MCF 10A (cell line): ENCODE measurements at regions of chr15 and their contacts with region 1.

Region 1: GRCh38 chr15:29821416-29822131 is 694 bp downstream of the TJP1 start:
- DNase-seq: peak; percentile 87
- H3K4me3 Mint-ChIP-seq: peak overlapping the region; percentile 87
- H3K27ac Mint-ChIP-seq: peak overlapping the region; percentile 92
- H3K4me1 Mint-ChIP-seq: peaks cover 11% of the 10 kb centered on the region
- H3K27me3 Mint-ChIP-seq: no peaks in the 10 kb centered on the region
- CTCF ChIP-seq: no peak

Region 2: DNA sequence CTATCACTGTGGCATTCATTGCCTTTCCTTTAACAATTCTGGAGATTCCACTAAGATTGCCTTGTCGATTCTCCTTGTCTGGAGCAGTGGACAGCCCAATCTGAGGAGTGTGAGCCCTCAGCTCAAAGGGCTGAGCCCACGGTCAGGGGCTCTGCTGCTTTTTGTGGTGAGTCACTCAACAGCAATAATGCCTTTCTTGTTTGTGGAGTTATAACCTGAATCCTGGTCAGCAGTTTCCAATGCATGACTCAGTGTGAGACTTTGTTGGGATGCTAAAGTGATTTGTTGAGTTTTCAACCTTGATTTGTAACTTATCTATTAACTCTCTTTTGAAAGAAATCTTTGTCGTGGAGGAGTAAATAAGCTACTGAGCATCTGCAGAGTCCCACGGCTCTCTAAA is 182.8 kb before region 1 on chr15:
- CTCF ChIA-PET with region 1: no interaction called
- POLR2A ChIA-PET with region 1: no interaction called
- intact Hi-C with region 1: no loop called
- DNase-seq: no peak
- H3K4me3 Mint-ChIP-seq: no peak overlapping the region
- H3K27ac Mint-ChIP-seq: no peak overlapping the region
- H3K4me1 Mint-ChIP-seq: peaks cover 5% of the 10 kb centered on the region
- H3K27me3 Mint-ChIP-seq: peaks cover 31% of the 10 kb centered on the region
- CTCF ChIP-seq: no peak

Region 3: DNA sequence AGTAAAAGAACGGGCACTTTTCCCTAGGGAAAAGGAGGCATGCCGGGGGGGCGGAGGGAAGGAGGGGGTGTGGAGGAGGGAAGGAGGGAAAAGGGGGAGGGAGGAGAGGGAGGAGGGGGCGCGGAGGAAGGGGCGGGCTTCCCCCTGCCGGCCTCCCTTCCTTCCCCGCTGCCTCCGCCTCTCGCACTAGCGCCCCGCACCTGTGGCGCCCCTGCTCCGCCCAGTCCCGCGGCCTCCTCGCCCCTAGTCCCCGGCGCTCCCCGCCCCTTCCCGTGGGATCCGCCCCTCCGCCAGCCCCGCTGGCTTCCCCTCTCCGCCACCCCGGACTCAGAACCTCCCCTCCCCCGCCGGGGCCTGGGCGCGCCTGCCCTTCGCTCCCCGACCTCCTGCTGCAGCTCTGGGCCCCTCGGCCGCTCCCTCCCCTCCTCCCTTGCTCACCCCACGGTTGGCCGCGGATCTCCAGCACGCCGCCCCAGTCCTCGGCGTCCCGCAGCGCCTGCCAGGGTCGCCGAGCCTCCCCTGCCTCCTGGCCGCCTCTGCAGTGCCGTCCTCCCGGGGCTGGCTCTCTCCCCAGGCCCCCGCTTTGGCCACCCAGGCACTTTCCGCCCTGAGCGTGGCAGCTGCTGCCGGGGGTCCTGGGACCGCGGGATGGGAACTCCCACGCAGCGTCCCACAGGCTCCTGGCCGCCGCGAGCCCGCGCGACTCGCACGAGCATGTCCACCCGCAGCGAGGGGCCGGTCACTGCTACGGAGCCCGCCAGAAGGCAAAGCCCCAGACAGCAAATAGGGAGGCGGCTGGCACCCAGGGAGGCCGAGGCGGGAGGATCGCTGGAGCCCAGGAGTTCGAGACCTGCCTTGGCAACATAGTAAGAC is 146.7 kb before region 1 on chr15:
- CTCF ChIA-PET with region 1: no interaction called
- POLR2A ChIA-PET with region 1: interaction called, 4 read pairs
- intact Hi-C with region 1: loop called (anchors 5 kb)
- DNase-seq: no peak
- H3K4me3 Mint-ChIP-seq: no peak overlapping the region
- H3K27ac Mint-ChIP-seq: no peak overlapping the region
- H3K4me1 Mint-ChIP-seq: peaks cover 13% of the 10 kb centered on the region
- H3K27me3 Mint-ChIP-seq: no peaks in the 10 kb centered on the region
- CTCF ChIP-seq: no peak

Region 4: DNA sequence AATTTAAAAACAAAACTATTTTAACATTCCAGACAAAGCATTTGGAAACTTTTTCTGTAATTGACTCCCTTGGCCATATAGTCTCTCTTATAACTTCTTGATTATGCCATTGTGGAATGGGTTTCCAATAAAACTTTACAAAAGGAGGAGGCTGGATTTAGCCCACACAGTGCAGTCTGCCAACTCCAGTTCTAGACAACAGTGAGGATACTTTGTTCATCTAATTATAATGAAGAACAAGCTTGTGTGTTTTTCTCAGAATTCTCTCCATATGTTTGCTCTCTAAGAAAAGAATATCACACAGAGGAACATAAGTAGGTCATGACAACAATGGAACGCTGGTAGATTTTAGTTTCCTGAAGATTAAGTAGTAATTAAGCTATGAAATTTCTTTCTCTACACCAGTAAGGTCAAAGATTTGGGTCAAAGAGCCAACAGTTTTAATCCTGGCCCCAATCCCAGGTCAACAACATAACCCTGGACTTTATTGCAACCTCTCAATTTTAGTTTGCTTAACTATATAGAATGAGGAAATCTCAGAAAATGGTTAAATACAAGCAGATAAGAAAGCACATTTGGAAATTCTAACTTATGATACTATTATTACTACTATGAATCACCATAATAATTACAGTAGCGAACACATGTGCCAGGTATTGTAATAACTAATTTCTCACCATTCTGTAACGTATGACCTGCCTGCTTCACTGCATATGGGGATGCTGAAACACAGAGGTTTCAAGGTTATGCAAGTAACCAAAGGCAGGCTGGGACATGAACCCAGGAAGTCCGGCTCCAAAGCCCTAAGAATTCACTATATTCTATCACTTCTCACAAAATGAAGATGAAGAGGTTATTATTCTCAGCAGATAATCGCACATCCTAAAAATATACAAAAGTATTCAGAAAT is 65.0 kb before region 1 on chr15:
- CTCF ChIA-PET with region 1: no interaction called
- POLR2A ChIA-PET with region 1: interaction called, 17 read pairs
- intact Hi-C with region 1: no loop called
- DNase-seq: peak; percentile 84
- H3K4me3 Mint-ChIP-seq: no peak overlapping the region
- H3K27ac Mint-ChIP-seq: peak overlapping the region; percentile 57
- H3K4me1 Mint-ChIP-seq: peaks cover 14% of the 10 kb centered on the region
- H3K27me3 Mint-ChIP-seq: no peaks in the 10 kb centered on the region
- CTCF ChIP-seq: no peak

Region 5: DNA sequence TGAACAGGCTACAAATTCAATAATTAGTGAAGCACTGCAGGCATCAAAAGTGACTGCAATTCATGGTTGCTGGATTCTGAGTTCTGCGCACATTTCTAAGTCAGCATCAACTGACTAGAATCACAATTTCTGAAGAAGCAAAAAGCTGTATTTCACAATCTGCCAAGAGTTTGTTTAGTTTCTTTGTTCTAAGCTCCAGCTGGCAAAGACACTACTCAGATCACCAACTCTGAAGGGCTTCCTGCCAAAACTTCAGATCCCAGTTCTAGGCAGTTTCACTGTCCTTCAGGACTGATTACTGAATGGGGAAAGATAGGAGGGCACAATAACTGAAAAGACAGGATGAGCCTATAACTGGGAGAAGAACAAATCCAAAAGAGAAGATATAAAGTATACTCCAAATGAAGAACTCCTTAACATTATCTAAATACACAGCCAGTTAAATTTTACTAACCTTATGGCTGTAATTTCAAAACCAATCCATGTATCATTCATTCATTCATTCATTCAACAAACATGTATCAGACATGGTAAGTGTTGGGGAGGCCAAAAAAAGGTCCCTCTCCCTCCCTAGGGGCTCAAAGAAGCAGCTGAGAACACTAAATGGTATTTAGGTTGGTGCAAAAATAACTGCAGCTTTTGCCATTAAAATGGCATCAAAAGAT is 16.4 kb before region 1 on chr15:
- CTCF ChIA-PET with region 1: interaction called, 3 read pairs
- POLR2A ChIA-PET with region 1: interaction called, 54 read pairs
- intact Hi-C with region 1: no loop called
- DNase-seq: peak; percentile 91
- H3K4me3 Mint-ChIP-seq: no peak overlapping the region
- H3K27ac Mint-ChIP-seq: peak overlapping the region; percentile 24
- H3K4me1 Mint-ChIP-seq: peaks cover 35% of the 10 kb centered on the region
- H3K27me3 Mint-ChIP-seq: no peaks in the 10 kb centered on the region
- CTCF ChIP-seq: no peak

Region 6: DNA sequence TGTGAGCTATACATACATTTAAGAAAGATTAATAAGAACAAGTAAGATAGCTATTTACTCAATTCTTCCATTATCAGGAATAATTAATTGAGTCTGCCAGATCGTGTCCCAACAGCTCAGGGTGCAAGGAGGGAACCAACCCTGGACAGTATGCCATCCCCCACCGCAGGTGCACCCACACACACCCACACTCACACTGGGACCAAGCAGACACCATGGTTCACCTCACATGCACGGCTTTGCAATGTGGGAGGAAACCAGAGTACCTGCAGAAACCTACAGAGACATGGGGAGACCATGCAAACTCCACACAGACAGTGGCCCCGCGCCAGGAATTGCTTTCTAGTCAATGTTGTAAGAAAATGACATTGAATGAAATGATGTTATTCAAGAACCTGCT is 20.7 kb after region 1 on chr15:
- CTCF ChIA-PET with region 1: no interaction called
- POLR2A ChIA-PET with region 1: interaction called, 4 read pairs
- intact Hi-C with region 1: loop called (anchors 2 kb)
- DNase-seq: no peak
- H3K4me3 Mint-ChIP-seq: no peak overlapping the region
- H3K27ac Mint-ChIP-seq: no peak overlapping the region
- H3K4me1 Mint-ChIP-seq: peaks cover 34% of the 10 kb centered on the region
- H3K27me3 Mint-ChIP-seq: no peaks in the 10 kb centered on the region
- CTCF ChIP-seq: no peak

Region 7: DNA sequence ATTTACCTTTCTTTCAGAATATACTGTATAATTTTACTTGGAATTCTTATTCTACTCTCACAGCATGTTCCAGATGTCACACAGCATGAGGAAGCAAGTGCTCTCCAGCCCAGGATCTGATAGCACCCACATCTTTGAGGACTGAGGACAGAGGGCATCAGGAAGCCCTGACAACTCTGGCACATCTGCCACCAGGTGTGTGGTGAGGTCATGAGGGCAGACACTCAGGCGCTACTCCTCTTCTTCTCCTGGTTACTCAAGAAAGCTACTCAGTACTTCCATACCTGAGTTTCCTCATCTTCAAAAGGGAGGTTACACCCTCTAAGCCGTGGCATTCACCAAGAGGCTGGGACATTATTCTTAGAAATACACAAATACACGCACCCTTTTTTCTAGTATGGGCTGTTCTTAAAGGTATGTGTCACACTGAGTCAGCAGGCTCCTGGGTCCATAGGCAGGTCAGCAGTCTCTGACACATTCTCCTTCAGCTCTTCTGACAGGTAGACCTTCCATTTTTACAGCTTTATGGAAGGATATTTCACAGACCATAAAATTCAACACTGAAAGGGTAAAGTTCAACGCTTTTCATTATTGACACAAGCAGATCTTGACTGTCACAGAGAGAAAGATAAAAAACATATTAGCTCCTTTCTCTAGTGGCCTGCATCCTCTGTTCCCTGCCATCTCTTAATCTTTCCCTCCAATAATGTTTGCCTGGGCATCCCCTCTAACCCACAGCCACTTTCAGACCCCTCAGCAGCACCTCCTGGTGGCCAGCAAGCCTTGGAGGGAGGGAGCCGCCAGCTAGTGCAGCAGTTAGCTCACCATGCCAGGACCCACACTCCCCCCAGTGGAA is 103.9 kb after region 1 on chr15:
- CTCF ChIA-PET with region 1: interaction called, 3 read pairs
- POLR2A ChIA-PET with region 1: interaction called, 59 read pairs
- intact Hi-C with region 1: loop called (anchors 1 kb)
- DNase-seq: peak; percentile 68
- H3K4me3 Mint-ChIP-seq: no peak overlapping the region
- H3K27ac Mint-ChIP-seq: peak overlapping the region; percentile 67
- H3K4me1 Mint-ChIP-seq: peaks cover 28% of the 10 kb centered on the region
- H3K27me3 Mint-ChIP-seq: no peaks in the 10 kb centered on the region
- CTCF ChIP-seq: peak; percentile 70

Region 8: DNA sequence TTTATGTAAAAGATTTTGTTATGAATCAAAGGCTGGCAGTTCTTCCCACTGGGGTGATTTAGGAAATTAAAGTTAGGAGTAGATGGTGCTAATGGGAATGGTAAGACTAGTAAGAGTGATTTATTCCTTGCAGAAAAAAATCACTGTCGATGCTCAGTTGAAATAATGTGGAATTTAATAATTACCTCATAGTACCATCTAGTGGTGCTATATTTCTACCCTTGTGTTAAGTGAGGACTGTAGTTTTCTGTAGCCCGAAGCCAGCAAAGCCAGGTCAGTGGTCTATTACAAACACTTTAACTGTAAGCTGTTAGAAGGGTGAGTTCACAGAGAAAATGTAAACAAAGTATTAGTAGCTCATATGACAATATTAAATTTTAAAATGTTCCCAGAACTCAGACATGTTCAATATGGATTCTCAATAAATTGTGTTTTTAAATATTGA is 221.7 kb after region 1 on chr15:
- CTCF ChIA-PET with region 1: interaction called, 4 read pairs
- POLR2A ChIA-PET with region 1: interaction called, 9 read pairs
- intact Hi-C with region 1: loop called (anchors 5 kb)
- DNase-seq: peak; percentile 33
- H3K4me3 Mint-ChIP-seq: no peak overlapping the region
- H3K27ac Mint-ChIP-seq: no peak overlapping the region
- H3K4me1 Mint-ChIP-seq: peaks cover 24% of the 10 kb centered on the region
- H3K27me3 Mint-ChIP-seq: no peaks in the 10 kb centered on the region
- CTCF ChIP-seq: peak; percentile 38